Panc1 (cell line): ENCODE measurements at regions of chr1 and their contacts with region 1.

Region 1: DNA sequence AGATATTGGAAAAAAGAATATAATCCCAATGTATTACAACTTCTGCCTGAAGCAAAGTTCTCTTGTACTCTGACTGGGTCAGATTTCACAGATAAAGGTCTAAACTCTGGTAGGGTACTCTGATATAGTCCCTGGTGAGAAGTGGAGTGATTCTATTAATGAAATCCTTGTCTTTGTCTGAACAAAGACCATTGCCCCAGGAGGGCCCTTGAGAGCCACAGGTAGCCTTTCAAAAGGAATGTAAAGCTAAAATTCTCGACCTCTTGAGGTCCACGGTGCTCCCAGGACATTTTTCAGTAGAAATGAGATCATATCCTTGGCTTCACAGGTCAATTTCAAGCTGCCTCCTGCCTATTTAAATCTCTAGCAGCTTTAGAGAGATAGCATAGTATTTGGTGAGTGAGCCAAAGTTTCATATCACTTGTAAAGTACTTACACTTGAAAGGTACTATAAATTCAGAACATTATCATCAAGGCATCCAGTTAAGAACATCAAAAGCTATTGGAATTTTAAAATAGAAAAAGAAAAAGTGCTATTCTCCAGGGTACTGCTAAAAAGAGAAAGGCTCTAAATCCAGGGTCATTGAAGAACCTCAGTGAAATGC is 10.1 kb downstream of the TNNI3K start:
- DNase-seq: no peak
- ATAC-seq: no peak
- H3K4me3 ChIP-seq: no peak overlapping the region
- H3K27ac ChIP-seq: no peak overlapping the region
- H3K4me1 ChIP-seq: no peaks in the 10 kb centered on the region
- H3K27me3 ChIP-seq: no peaks in the 10 kb centered on the region
- CTCF ChIP-seq: no peak

Region 2: DNA sequence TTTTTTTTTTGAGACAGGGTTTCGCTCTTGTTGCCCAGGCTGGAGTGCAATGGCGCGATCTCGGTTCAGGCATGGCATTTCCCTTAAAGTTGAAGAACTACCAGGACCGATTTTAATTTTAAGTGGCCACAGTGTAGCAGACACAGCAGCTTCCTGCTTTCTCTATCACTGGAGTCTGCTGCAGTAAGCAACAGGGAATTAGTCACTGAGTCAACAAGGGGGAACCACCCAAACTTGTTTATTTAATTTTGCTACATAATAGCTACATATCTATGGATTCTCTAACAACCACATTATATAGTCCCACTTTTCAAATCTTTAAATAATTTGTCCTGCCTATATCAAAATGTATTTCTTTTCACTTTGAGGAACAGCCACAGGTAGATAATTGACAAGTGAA is 22.6 kb before region 1 on chr1:
- CTCF ChIA-PET with region 1: no interaction called
- POLR2A ChIA-PET with region 1: no interaction called
- in situ Hi-C with region 1: no loop called
- intact Hi-C with region 1: loop called (anchors 2 kb)
- DNase-seq: no peak
- ATAC-seq: no peak
- H3K4me3 ChIP-seq: no peak overlapping the region
- H3K27ac ChIP-seq: no peak overlapping the region
- H3K4me1 ChIP-seq: no peaks in the 10 kb centered on the region
- H3K27me3 ChIP-seq: no peaks in the 10 kb centered on the region
- CTCF ChIP-seq: no peak